ENCODE measurements at regions of chr16 and their contacts with region 1.

Region 1: DNA sequence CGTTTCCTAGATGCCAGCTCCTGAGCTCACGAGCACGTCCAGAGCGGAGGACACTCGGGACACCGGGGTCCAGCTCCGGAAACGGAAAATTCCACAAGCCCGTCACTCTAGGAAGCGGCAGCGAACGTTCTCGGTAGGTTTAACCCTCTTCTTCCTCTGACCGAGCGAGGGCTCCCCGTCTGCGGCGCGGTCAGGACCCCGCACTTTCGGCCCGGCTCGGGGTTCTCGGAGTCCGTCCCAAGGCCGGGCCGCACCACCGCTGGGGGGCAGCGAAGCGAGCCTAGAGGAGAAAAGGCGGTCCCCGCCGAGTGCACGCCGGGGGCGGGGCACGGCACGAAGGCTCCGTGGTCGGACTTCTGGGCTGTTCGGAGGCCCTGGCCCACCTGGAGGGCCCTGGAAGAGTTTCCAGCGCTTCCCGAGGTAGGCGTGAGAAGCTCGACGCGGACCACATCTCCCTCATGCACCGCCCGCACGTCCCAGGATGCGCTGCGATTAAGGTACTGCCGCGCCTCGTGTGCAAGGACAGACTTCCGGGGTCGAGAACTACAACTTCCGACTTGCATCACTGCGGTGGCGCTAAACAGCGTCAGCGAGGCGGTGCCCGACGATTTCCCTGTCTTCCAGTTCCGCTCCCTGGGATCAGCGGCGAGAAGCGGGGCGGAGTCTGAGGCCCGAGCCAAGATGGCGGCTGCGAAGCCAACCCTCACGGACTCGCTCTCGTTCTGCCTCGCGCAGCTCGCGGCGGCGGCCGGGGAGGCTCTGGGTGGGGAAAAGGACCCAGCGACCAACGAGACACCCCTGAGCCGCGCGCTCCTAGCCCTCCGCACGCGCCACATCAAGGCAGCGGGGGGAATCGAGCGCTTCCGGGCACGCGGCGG is at the start of gene ARMC5:
- DNase-seq: peak; percentile 86 to 98
- H3K4me3 ChIP-seq: peak within 1 kb of the TSS; percentile 75 to 84
- H3K27ac ChIP-seq: peak within 1 kb of the TSS; percentile 99 to 100
- H3K4me1 ChIP-seq: peaks cover 20 to 47% of the 10 kb centered on the region in 2 donors
- H3K27me3 ChIP-seq: no peaks in the 10 kb centered on the region
- CTCF ChIP-seq: peak; percentile 55 to 67 (median 64)
- total RNA-seq, gene ARMC5: 10.0 TPM

Region 2: DNA sequence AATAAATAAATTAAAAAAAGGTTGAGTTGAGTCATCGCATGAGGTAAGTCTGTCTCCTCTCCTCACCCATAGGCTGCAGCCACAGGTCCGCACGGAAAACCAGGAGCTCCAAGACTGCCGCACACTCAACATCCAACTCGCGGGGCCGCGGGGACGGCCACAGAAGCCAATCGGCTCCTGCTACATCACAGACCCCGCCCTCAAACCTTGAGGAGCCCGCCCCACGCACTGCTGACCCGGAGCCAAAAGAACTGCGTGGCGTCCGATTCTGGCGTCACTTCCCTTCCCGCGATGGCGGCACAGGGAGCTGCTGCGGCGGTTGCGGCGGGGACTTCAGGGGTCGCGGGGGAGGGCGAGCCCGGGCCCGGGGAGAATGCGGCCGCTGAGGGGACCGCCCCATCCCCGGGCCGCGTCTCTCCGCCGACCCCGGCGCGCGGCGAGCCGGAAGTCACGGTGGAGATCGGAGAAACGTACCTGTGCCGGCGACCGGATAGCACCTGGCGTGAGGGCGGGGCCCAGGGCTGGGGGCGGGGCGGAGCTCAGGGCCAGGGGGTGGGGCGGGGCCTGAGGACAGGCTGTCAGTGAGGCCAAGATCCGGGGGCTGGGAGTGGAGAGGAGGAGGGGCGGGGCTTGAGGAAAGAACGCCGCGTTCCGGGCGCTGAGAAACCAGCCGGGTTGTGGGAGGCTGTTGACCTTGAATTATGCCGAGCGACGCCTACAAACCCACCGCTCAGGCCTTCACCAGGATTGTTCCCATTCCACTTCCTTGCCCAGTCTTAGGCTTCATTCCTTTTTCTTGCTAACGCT is 341.5 kb before region 1 on chr16 and contains the start of gene KAT8:
- intact Hi-C with region 1: loop called (anchors 1 kb)
- DNase-seq: peak; percentile 97 to 99
- H3K4me3 ChIP-seq: peak within 1 kb of the TSS; percentile 81 to 88
- H3K27ac ChIP-seq: peak within 1 kb of the TSS; percentile 97
- H3K4me1 ChIP-seq: peaks cover 0 to 13% of the 10 kb centered on the region in 2 donors
- H3K27me3 ChIP-seq: no peaks in the 10 kb centered on the region
- CTCF ChIP-seq: no peak
- total RNA-seq, gene KAT8: 113 TPM

Region 3: DNA sequence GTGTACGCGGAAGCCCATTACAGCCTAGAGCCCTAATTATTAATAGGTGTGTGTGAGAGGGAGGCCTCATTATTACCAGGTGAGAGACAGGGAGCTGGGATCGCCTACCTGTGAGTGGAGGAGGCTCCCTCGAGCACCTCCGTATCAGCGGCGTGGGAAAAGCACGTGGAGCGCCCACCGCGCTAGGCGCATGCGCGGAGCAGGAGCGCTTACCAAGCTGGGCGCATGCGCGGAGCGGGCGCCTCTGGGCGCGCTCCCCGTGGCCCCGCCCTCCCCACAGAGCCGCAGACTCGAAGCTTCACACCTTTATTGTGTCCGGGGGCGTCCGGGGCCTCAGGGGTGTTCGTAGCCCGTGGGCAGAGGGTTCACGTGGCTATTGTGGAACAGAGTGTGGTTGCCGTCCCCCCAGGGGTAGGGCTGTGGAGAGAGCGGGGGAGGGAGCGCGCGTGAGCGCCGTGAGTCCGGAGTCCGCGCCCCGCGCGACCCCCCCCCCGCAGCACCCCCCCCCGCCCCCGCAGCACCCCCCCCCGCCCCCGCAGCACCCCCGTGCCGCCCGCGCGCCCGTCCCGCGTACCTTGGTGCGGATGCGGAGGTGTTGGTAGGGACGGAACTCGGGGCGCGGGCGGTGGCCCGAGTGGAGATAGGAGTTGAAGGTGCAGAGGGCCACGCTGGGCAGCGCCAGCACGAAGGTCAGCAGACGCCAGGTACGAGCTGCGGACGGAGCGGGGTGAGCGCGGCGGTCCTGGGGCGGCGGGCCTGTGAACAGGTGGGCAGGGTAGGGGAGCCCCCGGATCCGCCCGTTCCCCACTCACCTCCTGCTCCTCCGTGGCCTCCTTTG is 31.4 kb before region 1 on chr16:
- intact Hi-C with region 1: no loop called
- DNase-seq: peak in 1 of 2 donors; percentile 71
- H3K4me3 ChIP-seq: peak overlapping the region; percentile 39 to 66
- H3K27ac ChIP-seq: no peak overlapping the region
- H3K4me1 ChIP-seq: peaks cover 0 to 4% of the 10 kb centered on the region in 2 donors
- H3K27me3 ChIP-seq: no peaks in the 10 kb centered on the region
- CTCF ChIP-seq: no peak

Region 4: DNA sequence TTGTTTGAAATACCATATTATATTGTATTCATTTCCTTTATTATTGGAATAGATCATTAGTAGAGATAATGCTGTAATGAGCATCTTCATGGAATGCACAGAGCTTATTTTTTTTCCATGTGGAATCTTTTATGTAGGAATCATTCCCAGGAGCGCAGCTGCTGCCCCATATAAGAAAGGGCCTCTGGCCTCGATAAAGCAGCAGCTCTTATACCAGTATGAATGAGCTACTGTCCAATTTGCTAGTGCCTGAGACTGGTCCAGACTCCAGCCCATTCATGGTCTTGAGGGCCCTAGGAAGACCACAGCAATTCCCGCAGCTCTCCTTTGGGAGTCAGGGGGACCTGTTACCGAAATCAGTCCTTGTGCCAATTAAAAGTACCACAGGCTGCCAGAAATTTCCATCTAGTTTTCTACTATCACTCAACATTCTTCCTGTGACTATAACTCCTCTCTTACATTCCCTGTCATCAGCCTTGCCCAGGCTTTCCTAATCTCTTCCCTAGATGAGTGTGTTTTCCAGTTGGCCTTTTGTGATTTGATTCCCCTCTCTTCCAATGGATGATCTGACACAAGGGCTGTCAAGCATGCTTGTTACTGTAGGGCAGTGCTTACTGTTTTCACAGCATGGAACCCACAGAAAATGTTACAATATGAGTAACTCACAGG is 18.4 kb before region 1 on chr16:
- intact Hi-C with region 1: loop called (anchors 2 kb)
- DNase-seq: no peak
- H3K4me3 ChIP-seq: no peak overlapping the region
- H3K27ac ChIP-seq: no peak overlapping the region
- H3K4me1 ChIP-seq: no peaks in the 10 kb centered on the region
- H3K27me3 ChIP-seq: no peaks in the 10 kb centered on the region
- CTCF ChIP-seq: no peak

Region 5: GRCh38 chr16:31472709-31473203 is 13.7 kb after region 1 on chr16:
- intact Hi-C with region 1: loop called (anchors 1 kb)
- DNase-seq: peak; percentile 78 to 97
- H3K4me3 ChIP-seq: peak overlapping the region; percentile 89 to 91
- H3K27ac ChIP-seq: peak overlapping the region; percentile 96 to 100
- H3K4me1 ChIP-seq: peaks cover 0 to 26% of the 10 kb centered on the region in 2 donors
- H3K27me3 ChIP-seq: no peaks in the 10 kb centered on the region
- CTCF ChIP-seq: peak; percentile 87 to 93 (median 88)

Region 6: DNA sequence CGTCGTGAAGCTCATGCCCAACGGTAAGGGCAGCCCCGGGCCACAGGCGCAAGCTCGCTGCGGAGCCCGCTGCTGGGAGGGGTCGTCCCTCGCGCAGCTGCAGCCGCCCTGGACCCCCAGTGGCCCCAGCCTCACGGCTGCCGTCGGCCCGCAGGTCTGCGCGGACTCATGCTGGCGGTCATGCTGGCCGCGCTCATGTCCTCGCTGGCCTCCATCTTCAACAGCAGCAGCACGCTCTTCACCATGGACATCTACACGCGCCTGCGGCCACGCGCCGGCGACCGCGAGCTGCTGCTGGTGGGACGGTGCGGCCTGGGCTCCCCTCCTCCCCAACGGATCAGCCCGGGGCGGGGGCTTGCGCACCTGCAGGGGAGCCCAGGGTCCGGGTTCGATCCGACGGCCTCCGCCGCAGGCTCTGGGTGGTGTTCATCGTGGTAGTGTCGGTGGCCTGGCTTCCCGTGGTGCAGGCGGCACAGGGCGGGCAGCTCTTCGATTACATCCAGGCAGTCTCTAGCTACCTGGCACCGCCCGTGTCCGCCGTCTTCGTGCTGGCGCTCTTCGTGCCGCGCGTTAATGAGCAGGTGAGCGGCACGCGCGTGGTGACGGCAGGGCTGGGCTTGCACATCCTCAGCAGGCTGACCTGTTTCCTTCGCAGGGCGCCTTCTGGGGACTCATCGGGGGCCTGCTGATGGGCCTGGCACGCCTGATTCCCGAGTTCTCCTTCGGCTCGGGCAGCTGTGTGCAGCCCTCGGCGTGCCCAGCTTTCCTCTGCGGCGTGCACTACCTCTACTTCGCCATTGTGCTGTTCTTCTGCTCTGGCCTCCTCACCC is 29.6 kb after region 1 on chr16:
- intact Hi-C with region 1: no loop called
- DNase-seq: no peak
- H3K4me3 ChIP-seq: peak overlapping the region; percentile 66 to 68
- H3K27ac ChIP-seq: no peak overlapping the region
- H3K4me1 ChIP-seq: peaks cover 10 to 15% of the 10 kb centered on the region in 2 donors
- H3K27me3 ChIP-seq: no peaks in the 10 kb centered on the region
- CTCF ChIP-seq: no peak

Region 7: GRCh38 chr16:31507929-31508705 is 49.0 kb after region 1 on chr16 and contains the start of gene RUSF1:
- intact Hi-C with region 1: loop called (anchors 5 kb)
- DNase-seq: peak; percentile 67 to 96
- H3K4me3 ChIP-seq: peak within 1 kb of the TSS; percentile 95 to 97
- H3K27ac ChIP-seq: peak within 1 kb of the TSS; percentile 96 to 97
- H3K4me1 ChIP-seq: peaks cover 5 to 24% of the 10 kb centered on the region in 2 donors
- H3K27me3 ChIP-seq: no peaks in the 10 kb centered on the region
- CTCF ChIP-seq: no peak
- total RNA-seq, gene RUSF1: 80.9 TPM

Region 8: DNA sequence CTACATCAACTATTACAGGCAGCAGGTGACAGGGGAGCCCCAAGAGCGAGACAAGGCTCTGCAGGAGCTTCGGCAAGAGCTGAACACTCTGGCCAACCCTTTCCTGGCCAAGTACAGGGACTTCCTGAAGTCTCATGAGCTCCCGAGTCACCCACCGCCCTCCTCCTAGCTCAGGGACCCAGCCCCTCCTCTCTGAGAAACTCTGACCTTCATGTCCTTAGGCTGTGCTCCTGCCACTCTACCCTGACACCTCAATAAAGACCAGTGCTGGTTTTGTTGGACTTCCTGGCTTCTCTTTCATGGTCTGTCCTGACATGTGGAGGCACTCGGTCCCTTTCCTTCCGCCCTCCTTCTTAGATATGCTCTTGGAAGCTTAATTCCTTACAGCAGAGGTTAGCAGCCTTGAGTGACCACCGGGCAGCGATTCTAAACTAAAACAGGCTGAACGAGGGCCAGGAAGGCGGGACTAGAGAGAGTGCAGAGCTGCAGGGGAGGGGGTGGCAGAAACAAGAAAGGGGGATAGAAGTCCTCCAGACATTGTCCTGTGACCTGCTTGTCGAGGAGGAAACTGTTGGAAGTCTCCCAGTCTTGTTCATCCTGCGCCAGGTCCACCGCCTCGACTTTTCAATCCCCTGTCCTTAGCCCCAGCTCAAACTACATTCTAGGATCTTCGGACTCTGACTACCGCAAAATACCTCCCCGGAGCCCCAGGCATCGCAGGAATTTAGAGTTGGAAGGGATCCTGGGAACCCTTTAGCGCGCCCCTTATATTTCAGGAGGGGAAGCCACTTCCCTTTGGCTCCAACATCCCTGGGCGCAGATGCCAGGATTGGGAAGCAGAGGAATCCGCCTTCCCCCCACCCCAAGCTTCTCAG is 69.7 kb after region 1 on chr16:
- intact Hi-C with region 1: no loop called
- DNase-seq: no peak
- H3K4me3 ChIP-seq: peak overlapping the region; percentile 47 to 68
- H3K27ac ChIP-seq: no peak overlapping the region
- H3K4me1 ChIP-seq: no peaks in the 10 kb centered on the region
- H3K27me3 ChIP-seq: no peaks in the 10 kb centered on the region
- CTCF ChIP-seq: no peak

Region 9: DNA sequence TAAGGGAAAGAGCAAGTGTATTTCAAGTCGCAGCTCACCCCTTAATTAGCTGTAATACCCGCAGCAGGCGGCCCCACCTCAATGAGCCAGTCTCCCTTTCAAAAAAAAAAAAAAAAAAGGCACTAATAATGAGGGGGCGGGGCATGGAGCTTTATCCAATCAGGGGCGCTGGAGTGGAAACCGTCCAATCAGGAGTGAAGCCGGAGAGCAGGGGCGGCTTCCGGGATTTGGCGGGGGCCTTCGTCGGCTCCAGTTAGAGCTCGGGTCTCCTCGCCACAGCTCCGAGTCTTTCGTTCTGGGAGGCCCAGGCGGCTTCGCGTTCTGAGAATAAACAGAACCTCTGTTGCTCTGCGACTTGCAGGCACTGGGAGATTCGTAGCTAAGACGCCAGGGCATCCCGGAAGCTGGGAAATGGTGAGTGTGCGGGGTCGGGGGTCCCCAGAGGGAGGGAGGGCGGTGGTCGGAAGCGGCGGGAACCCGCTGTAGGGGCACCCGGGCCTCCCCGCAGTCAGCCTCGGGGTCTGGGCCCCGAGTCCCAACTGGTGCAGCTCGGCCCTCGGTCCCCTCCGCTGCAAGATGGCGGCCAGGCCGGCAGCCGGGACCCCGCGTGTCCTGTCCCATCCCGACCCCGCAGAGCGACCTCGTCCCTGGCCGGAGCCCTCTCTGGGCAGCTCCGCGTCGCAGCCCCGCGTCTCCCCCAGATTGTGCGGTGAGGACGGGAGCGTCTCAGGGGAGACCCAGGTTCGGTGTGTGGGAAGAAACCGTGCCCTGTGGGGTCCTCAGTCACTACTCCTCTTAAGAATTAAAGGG is 414.7 kb after region 1 on chr16 and contains the start of gene ZNF267:
- intact Hi-C with region 1: loop called (anchors 5 kb)
- DNase-seq: peak; percentile 82 to 98
- H3K4me3 ChIP-seq: peak within 1 kb of the TSS; percentile 75 to 87
- H3K27ac ChIP-seq: peak within 1 kb of the TSS; percentile 88 to 92
- H3K4me1 ChIP-seq: peaks cover 3 to 14% of the 10 kb centered on the region in 2 donors
- H3K27me3 ChIP-seq: no peaks in the 10 kb centered on the region
- CTCF ChIP-seq: no peak
- total RNA-seq, gene ZNF267: 3.8 TPM

Measured in ascending aorta (tissue), 2 donors.